Dorsolateral prefrontal cortex (tissue), 120 donors: ENCODE measurements at regions of chr12 and their contacts with region 1.

Region 1: GRCh38 chr12:71439362-71440314 is at the start of gene LGR5:
- DNase-seq: peak; percentile 27 to 95 (median 90)
- H3K4me3 ChIP-seq: peak within 1 kb of the TSS; percentile 47 to 84 (median 69)
- H3K27ac ChIP-seq: peak within 1 kb of the TSS in 53 of 59 donors; percentile 4 to 89 (median 61)
- H3K27me3 ChIP-seq: peaks cover 0 to 51% (median 9%) of the 10 kb centered on the region in 45 donors
- CTCF ChIP-seq: peak in 19 of 56 donors; percentile 7 to 50 (median 15)
- total RNA-seq, gene LGR5: 1.1 to 33.8 (median 7.3) TPM

Region 2: GRCh38 chr12:71420775-71421406 is 18.7 kb before region 1 on chr12:
- intact Hi-C with region 1: no loop called
- DNase-seq: no peak
- H3K4me3 ChIP-seq: no peak overlapping the region
- H3K27ac ChIP-seq: no peak overlapping the region
- H3K27me3 ChIP-seq: peaks cover 0 to 3% (median 0%) of the 10 kb centered on the region in 45 donors
- CTCF ChIP-seq: no peak

Region 3: GRCh38 chr12:71475280-71475679 is 35.6 kb after region 1 on chr12:
- intact Hi-C with region 1: loop called in 1 of 2 experiments (anchors 2 kb)
- DNase-seq: peak in 2 of 10 donors; percentile 19 to 45
- H3K4me3 ChIP-seq: peak overlapping the region in 2 of 59 donors; percentile 2 to 28
- H3K27ac ChIP-seq: peak overlapping the region in 32 of 59 donors; percentile 5 to 80 (median 40)
- H3K27me3 ChIP-seq: peaks cover 0 to 6% (median 0%) of the 10 kb centered on the region in 45 donors
- CTCF ChIP-seq: peak in 2 of 56 donors; percentile 8 to 15